Naive thymus-derived CD8-positive, alpha-beta T cell (primary cell): ENCODE measurements at regions of chr1 and their contacts with region 1.

Region 1: GRCh38 chr1:39026051-39026865 is at the start of gene NDUFS5:
- DNase-seq: peak; percentile 68 to 90 (median 77)
- ATAC-seq: peak; percentile 89 to 92
- H3K4me3 Mint-ChIP-seq: peak within 1 kb of the TSS; percentile 93 to 100 (median 96)
- H3K27ac Mint-ChIP-seq: peak within 1 kb of the TSS; percentile 93 to 99 (median 98)
- H3K4me1 Mint-ChIP-seq: peaks cover 10 to 43% (median 32%) of the 10 kb centered on the region in 4 donors
- H3K27me3 Mint-ChIP-seq: peaks cover 0 to 2% (median 0%) of the 10 kb centered on the region in 5 donors
- polyA plus RNA-seq, gene NDUFS5: 614 to 657 (median 626) TPM

Region 2: DNA sequence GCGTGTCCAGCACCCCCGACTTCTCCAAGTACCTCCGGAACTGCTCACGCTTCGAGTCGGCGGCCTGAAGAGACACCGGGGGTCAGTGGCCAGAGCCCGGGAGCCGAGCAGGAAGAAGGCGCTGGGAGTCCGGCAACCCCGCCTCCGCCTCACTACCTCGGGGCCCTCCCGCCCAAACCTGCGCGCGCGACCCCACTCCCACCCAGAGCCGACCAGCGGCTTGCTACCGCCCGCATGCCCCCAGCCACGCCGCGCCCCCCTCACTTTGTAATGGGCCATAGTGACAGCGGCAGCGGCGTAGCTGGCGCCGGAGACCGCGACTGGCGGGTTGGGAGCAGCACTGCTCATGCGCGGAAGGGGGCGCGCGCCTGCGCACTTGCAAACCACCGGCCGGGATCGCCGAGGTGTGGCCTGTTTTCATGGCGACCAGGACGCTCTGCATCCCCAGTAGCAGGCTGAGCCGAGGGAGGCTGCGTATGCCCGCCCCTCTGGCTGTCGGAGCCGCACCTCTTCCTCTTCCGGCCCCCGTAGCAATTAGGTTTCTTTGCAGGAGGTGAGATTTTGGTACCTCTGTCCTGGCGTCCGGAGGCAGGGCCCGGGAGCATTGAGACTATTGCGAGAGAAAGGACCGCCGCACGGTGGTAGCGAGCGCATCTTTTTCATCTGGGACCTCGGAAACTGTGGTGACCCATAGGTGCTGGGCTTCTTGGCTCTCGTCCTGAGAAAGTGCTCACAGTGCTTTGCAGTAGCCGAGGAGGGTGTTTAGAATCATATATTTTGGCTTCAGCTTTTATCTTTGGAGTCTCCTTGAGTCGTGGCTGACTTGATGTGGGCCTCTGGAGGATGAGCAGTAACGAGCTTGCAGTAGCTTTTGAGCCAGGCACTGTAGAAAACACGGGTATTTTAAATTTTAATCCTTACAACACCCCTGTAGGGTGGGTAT is 153.0 kb before region 1 on chr1 and contains the start of gene MYCBP:
- POLR2A ChIA-PET with region 1: interaction called, 14 read pairs
- DNase-seq: peak; percentile 95 to 99 (median 96)
- ATAC-seq: peak; percentile 97 to 99
- H3K4me3 Mint-ChIP-seq: peak within 1 kb of the TSS; percentile 82 to 95 (median 93)
- H3K27ac Mint-ChIP-seq: peak within 1 kb of the TSS; percentile 70 to 97 (median 94)
- H3K4me1 Mint-ChIP-seq: peaks cover 12 to 41% (median 35%) of the 10 kb centered on the region in 4 donors
- H3K27me3 Mint-ChIP-seq: peaks cover 0 to 2% (median 0%) of the 10 kb centered on the region in 5 donors
- polyA plus RNA-seq, gene MYCBP: 49.6 to 63.8 (median 59.5) TPM

Region 3: GRCh38 chr1:38973659-38974424 is 52.4 kb before region 1 on chr1:
- POLR2A ChIA-PET with region 1: interaction called, 11 read pairs
- DNase-seq: no peak
- ATAC-seq: no peak
- H3K4me3 Mint-ChIP-seq: peak overlapping the region in 1 of 10 donors; percentile 10
- H3K27ac Mint-ChIP-seq: peak overlapping the region in 1 of 10 donors; percentile 13
- H3K4me1 Mint-ChIP-seq: peaks cover 0 to 21% (median 8%) of the 10 kb centered on the region in 4 donors
- H3K27me3 Mint-ChIP-seq: peaks cover 0 to 5% (median 0%) of the 10 kb centered on the region in 5 donors

Region 4: GRCh38 chr1:38997034-38997900 is 29.0 kb before region 1 on chr1:
- POLR2A ChIA-PET with region 1: interaction called, 11 read pairs
- DNase-seq: peak in 3 of 10 donors; percentile 29 to 45 (median 33)
- ATAC-seq: peak; percentile 41 to 82
- H3K4me3 Mint-ChIP-seq: peak overlapping the region; percentile 54 to 79 (median 72)
- H3K27ac Mint-ChIP-seq: peak overlapping the region; percentile 63 to 95 (median 88)
- H3K4me1 Mint-ChIP-seq: peaks cover 37 to 68% (median 58%) of the 10 kb centered on the region in 4 donors
- H3K27me3 Mint-ChIP-seq: no peaks in the 10 kb centered on the region